Sigmoid colon (tissue), 7 donors: ENCODE measurements at regions of chr6 and their contacts with region 1.

Region 1: GRCh38 chr6:90478789-90479602 is 107.9 kb downstream of the MAP3K7 start:
- DNase-seq: peak; percentile 95
- H3K4me3 ChIP-seq: no peak overlapping the region
- H3K27ac ChIP-seq: peak overlapping the region in 1 of 4 donors; percentile 19
- H3K4me1 ChIP-seq: peaks cover 0 to 5% (median 2%) of the 10 kb centered on the region in 4 donors
- H3K27me3 ChIP-seq: no peaks in the 10 kb centered on the region
- CTCF ChIP-seq: peak; percentile 67 to 89 (median 80)
- EP300 ChIP-seq: no peak
- POLR2A ChIP-seq: no peak

Region 2: DNA sequence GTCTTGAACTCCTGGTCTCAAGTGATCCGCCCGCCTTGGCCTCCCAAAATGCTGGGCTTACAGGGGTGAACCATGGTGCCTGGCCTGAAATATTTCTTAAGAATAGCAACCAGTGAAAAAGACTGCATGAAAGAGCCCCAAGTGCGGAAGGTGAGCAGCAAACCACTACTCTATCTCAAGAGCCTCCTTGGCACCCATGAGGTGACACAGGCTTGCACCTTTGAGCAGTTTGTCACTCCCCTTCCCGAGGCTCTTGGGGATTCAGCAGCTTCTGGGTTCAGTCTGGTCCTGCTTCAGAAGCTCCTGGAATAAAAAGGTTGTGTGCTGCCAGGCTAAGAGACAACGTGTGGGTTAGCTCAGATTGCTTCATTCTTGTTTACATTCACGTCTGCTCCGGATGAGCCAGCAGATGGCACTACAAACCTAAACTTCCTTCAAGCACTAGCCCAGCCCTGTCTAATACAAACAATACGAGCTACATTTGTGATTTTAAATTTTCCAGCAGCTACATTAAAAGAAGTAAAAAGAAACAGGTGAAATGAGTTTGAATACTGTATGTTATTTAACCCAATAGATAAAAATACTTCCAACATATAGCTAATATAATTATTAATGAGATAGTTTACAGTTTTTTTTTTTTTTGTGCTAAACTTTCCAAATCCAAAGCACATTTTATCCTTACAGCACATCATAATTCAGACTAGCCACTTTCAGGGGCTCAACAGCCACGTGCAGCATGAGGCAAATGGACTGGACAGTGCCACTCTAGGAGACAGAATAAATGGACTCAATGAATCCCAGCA is 538.6 kb before region 1 on chr6:
- intact Hi-C with region 1: loop called (anchors 1 kb)
- DNase-seq: peak; percentile 82
- H3K4me3 ChIP-seq: no peak overlapping the region
- H3K27ac ChIP-seq: no peak overlapping the region
- H3K4me1 ChIP-seq: peaks cover 0 to 9% (median 2%) of the 10 kb centered on the region in 4 donors
- H3K27me3 ChIP-seq: no peaks in the 10 kb centered on the region
- CTCF ChIP-seq: peak; percentile 13 to 59 (median 54)
- EP300 ChIP-seq: no peak
- POLR2A ChIP-seq: no peak

Region 3: DNA sequence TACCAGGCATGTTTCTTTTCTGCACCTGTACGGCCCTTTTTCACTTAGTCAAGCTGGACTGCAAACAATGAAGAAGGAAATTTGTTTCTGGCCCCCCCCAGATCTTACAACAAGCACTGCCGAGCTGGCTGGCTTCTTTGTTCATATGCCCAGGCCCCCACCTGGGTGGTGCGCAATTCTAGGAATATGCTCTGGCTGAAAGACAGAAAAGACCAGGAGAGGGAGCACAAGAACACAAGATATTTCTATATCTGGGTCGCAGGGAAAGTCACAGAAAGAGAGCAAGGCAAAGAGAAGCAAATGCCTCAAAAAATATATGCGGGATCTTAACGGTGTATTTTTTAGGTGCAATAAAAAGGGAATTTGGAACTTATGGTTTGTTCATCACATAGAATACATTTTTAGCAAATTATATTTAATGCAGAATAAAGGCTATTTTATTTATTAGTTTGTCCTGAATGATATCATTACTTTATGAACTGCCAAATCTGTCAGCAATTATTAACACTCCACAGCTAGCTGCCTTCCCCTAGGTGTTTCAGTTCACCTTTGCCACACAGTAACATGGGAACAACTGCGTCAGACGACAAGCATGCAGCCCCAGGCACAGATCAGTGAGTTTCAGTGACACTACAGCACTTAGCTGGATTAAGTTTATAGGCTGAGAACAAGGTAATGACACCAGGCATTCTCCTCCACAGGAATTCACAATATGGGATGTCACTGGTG is 508.2 kb before region 1 on chr6:
- intact Hi-C with region 1: loop called (anchors 1 kb)
- DNase-seq: no peak
- H3K4me3 ChIP-seq: no peak overlapping the region
- H3K27ac ChIP-seq: no peak overlapping the region
- H3K4me1 ChIP-seq: peaks cover 0 to 3% (median 0%) of the 10 kb centered on the region in 4 donors
- H3K27me3 ChIP-seq: no peaks in the 10 kb centered on the region
- CTCF ChIP-seq: peak; percentile 17 to 56 (median 56)
- EP300 ChIP-seq: no peak
- POLR2A ChIP-seq: no peak

Region 4: GRCh38 chr6:90285611-90286381 is 193.2 kb before region 1 on chr6:
- intact Hi-C with region 1: loop called (anchors 5 kb)
- DNase-seq: peak; percentile 86
- H3K4me3 ChIP-seq: peak overlapping the region in 1 of 4 donors; percentile 13
- H3K27ac ChIP-seq: peak overlapping the region in 3 of 4 donors; percentile 27 to 51 (median 50)
- H3K4me1 ChIP-seq: peaks cover 0 to 21% (median 18%) of the 10 kb centered on the region in 4 donors
- H3K27me3 ChIP-seq: no peaks in the 10 kb centered on the region
- CTCF ChIP-seq: no peak
- EP300 ChIP-seq: no peak
- POLR2A ChIP-seq: no peak

Region 5: DNA sequence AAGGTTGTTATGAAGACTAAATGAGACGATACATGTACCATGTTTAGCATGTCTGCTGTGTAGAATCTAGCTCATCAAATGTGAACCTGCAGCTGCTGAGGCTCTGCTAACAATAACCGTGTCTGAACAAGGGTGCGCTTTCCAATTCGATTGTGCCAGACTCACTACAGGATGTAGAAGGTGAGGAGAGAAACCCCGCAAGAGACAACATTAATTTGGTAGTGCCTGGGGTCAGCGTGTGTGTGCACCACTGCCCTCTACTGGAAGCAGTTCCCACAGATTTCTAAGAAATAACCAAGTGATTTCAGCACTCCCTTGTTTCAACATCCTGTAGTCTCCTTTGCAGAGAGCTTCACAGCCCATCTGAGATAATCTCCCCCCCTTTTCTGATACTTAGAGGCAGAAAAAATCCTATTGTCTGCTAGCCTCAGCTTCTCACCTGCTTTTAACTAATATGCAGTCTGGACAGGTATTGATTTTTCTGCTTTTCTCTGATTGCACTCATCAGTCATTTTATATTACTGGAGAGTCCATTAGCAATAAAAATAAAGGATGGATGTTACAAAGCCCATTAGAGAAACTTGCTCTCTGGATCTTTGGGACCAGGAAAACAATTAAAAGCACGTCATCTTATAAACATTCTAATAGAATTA is 85.6 kb before region 1 on chr6:
- intact Hi-C with region 1: loop called (anchors 2 kb)
- DNase-seq: peak; percentile 71
- H3K4me3 ChIP-seq: no peak overlapping the region
- H3K27ac ChIP-seq: no peak overlapping the region
- H3K4me1 ChIP-seq: no peaks in the 10 kb centered on the region
- H3K27me3 ChIP-seq: no peaks in the 10 kb centered on the region
- CTCF ChIP-seq: peak; percentile 45 to 79 (median 59)
- EP300 ChIP-seq: no peak
- POLR2A ChIP-seq: no peak

Region 6: DNA sequence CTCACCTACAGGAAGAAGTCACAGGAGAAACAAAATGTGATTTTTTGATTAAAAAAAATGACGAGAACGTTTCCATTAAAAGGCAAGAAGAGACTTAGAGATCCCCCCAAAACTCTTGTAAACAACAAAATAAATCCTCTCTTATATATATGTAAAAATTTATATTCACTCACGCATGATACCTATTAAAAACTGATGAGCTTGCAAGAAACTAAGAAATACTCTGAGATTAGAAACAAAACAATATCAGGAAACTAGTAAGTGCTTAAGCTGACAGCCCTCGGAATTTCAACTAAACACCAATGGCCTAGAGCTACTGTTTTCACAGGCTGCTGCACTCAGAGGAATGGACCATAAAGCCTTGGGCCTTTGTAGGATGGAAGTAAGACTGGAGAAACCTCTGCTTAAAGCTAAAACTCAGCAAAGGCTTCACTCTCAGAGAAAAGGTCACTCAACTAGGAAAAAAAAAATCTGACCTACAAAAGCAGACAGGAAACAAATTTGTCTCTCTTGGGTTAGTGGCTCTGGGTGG is 44.8 kb after region 1 on chr6:
- intact Hi-C with region 1: no loop called
- DNase-seq: no peak
- H3K4me3 ChIP-seq: no peak overlapping the region
- H3K27ac ChIP-seq: no peak overlapping the region
- H3K4me1 ChIP-seq: no peaks in the 10 kb centered on the region
- H3K27me3 ChIP-seq: no peaks in the 10 kb centered on the region
- CTCF ChIP-seq: no peak
- EP300 ChIP-seq: no peak
- POLR2A ChIP-seq: no peak

Region 7: GRCh38 chr6:91751526-91751925 is 1272.5 kb after region 1 on chr6:
- intact Hi-C with region 1: no loop called
- DNase-seq: no peak
- H3K4me3 ChIP-seq: no peak overlapping the region
- H3K27ac ChIP-seq: no peak overlapping the region
- H3K4me1 ChIP-seq: no peaks in the 10 kb centered on the region
- H3K27me3 ChIP-seq: no peaks in the 10 kb centered on the region
- CTCF ChIP-seq: no peak
- EP300 ChIP-seq: no peak
- POLR2A ChIP-seq: no peak